Activated CD8-positive, alpha-beta T cell treated with anti-CD3 and anti-CD28 coated beads for 36 hours (primary cell): ENCODE measurements at regions of chr14 and their contacts with region 1.

Region 1: DNA sequence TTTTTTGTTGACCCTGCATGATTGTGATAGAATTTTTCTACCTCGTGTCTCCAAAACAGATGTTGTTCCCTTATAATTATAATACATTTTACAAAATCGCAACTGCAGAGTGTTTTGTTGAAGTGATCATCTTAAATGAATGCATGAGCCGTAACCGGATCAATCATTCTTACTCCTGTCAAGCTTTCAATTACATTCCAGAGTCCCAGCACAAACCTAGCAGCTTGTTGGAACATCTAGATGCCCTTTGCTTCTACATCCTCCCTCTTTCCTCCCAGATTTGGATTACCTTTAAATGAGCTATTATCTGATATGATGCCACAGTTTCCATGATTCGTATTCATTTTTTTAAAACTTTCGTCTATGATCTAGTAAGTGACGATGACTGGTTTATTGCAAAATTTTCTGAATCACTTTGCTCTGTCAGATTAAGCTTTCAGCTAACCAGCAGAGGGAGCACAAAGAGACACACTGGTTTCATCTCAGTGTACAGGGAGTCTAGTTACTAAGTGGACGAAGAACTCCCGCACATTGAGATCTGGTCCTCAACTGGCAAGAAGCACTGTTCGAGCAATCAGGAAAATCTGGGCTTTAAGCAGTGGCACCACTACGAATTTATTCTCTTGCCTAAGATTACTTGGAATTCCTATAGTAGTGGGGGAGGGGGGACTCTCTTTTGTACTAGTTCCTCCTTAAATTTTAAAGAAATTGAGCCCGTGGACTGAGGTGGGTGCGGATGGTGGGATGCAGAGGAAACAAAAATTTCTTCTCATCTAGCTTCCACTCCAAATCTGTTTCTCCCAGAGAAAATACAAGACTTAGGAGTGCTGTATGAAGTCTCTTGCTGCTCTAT is 40.9 kb downstream of the TSHR start:
- DNase-seq: peak; percentile 28
- ATAC-seq: peak; percentile 90
- H3K4me3 Mint-ChIP-seq: no peak overlapping the region
- H3K27ac Mint-ChIP-seq: no peak overlapping the region
- H3K4me1 Mint-ChIP-seq: peaks cover 4% of the 10 kb centered on the region
- H3K27me3 Mint-ChIP-seq: peaks cover 21% of the 10 kb centered on the region
- CTCF ChIP-seq: peak; percentile 44

Region 2: DNA sequence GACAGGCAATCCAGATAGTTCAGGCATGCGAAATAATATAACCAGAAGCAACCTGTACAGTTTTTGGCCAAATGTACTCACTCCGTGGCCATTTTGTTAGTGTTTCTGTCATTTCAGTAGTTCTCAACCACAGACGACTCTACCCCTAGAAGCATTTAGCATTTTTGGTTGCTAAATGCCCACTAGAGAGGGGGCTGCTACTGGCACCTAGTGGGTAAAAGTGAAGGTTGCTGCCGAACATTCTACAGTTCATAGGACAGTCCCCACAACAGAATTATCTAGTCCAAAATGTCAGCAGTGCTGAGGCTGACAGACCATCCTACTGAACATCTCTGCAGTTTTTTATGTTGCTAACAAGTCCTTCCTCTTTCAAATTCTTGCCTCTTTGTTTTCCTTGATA is 66.5 kb after region 1 on chr14:
- CTCF ChIA-PET with region 1: interaction called, 13 read pairs
- POLR2A ChIA-PET with region 1: no interaction called
- intact Hi-C with region 1: no loop called
- DNase-seq: peak; percentile 54
- ATAC-seq: peak; percentile 84
- H3K4me3 Mint-ChIP-seq: no peak overlapping the region
- H3K27ac Mint-ChIP-seq: no peak overlapping the region
- H3K4me1 Mint-ChIP-seq: no peaks in the 10 kb centered on the region
- H3K27me3 Mint-ChIP-seq: peaks cover 4% of the 10 kb centered on the region
- CTCF ChIP-seq: peak; percentile 52

Region 3: GRCh38 chr14:81164167-81164774 is 168.0 kb after region 1 on chr14:
- CTCF ChIA-PET with region 1: interaction called, 17 read pairs
- POLR2A ChIA-PET with region 1: no interaction called
- intact Hi-C with region 1: loop called (anchors 2 kb)
- DNase-seq: peak; percentile 83
- ATAC-seq: peak; percentile 100
- H3K4me3 Mint-ChIP-seq: no peak overlapping the region
- H3K27ac Mint-ChIP-seq: no peak overlapping the region
- H3K4me1 Mint-ChIP-seq: peaks cover 14% of the 10 kb centered on the region
- H3K27me3 Mint-ChIP-seq: no peaks in the 10 kb centered on the region
- CTCF ChIP-seq: peak; percentile 74

Region 4: DNA sequence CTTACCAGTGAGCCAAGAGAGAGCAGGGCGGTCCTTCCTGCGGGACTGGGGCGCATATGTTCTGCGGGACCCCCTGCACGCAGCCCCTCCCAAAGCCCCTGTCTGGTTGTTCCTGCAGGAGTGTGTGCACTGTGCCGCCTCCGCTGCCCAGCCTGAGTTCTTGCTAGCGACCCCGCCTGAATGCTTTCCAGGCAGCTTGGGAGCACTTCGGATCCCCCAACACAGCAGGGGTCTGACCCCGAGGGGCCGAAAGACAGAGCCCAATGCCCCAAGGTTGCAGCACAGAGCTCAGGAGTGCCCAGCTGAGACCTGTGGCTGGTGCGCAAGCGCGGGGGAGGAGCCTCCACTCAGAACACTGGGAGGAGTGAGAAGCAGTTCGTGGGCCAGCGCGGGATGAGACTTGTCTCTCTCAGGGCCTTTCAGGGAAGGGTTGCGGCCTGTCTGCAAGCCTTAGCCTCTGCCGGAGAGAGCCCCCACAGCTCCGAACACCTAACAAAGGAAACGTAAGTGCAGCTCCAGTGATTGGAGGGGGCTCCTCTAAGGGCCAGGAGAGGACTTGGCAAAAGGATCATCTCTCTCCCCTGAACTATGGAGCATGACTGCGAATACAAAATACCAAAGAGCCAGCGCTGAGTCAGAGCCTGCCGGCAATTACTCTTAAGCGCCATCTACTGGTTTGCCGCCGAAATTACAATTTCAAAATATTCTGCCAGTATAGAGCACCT is 174.0 kb after region 1 on chr14:
- CTCF ChIA-PET with region 1: interaction called, 21 read pairs
- POLR2A ChIA-PET with region 1: no interaction called
- intact Hi-C with region 1: loop called (anchors 2 kb)
- DNase-seq: peak; percentile 93
- ATAC-seq: peak; percentile 97
- H3K4me3 Mint-ChIP-seq: peak overlapping the region; percentile 90
- H3K27ac Mint-ChIP-seq: peak overlapping the region; percentile 95
- H3K4me1 Mint-ChIP-seq: peaks cover 15% of the 10 kb centered on the region
- H3K27me3 Mint-ChIP-seq: no peaks in the 10 kb centered on the region
- CTCF ChIP-seq: peak; percentile 86

Region 5: GRCh38 chr14:81176241-81176640 is 180.0 kb after region 1 on chr14:
- CTCF ChIA-PET with region 1: interaction called, 17 read pairs
- POLR2A ChIA-PET with region 1: no interaction called
- intact Hi-C with region 1: no loop called
- DNase-seq: no peak
- ATAC-seq: no peak
- H3K4me3 Mint-ChIP-seq: no peak overlapping the region
- H3K27ac Mint-ChIP-seq: no peak overlapping the region
- H3K4me1 Mint-ChIP-seq: peaks cover 10% of the 10 kb centered on the region
- H3K27me3 Mint-ChIP-seq: no peaks in the 10 kb centered on the region
- CTCF ChIP-seq: no peak

Region 6: GRCh38 chr14:81192594-81192993 is 196.3 kb after region 1 on chr14:
- CTCF ChIA-PET with region 1: no interaction called
- POLR2A ChIA-PET with region 1: no interaction called
- intact Hi-C with region 1: no loop called
- DNase-seq: peak; percentile 9
- ATAC-seq: peak; percentile 39
- H3K4me3 Mint-ChIP-seq: peak overlapping the region; percentile 31
- H3K27ac Mint-ChIP-seq: peak overlapping the region; percentile 82
- H3K4me1 Mint-ChIP-seq: peaks cover 45% of the 10 kb centered on the region
- H3K27me3 Mint-ChIP-seq: no peaks in the 10 kb centered on the region
- CTCF ChIP-seq: no peak